Naive thymus-derived CD4-positive, alpha-beta T cell (primary cell): ENCODE measurements at regions of chr1 and their contacts with region 1.

Region 1: GRCh38 chr1:238501290-238501689 is 610.6 kb upstream of the ZP4 start:
- DNase-seq: no peak
- ATAC-seq: no peak
- H3K4me3 ChIP-seq: no peak overlapping the region
- H3K4me3 Mint-ChIP-seq: no peak overlapping the region
- H3K27ac ChIP-seq: no peak overlapping the region
- H3K27ac Mint-ChIP-seq: no peak overlapping the region
- H3K4me1 ChIP-seq: no peaks in the 10 kb centered on the region
- H3K4me1 Mint-ChIP-seq: no peaks in the 10 kb centered on the region
- H3K27me3 ChIP-seq: no peaks in the 10 kb centered on the region
- H3K27me3 Mint-ChIP-seq: no peaks in the 10 kb centered on the region

Region 2: DNA sequence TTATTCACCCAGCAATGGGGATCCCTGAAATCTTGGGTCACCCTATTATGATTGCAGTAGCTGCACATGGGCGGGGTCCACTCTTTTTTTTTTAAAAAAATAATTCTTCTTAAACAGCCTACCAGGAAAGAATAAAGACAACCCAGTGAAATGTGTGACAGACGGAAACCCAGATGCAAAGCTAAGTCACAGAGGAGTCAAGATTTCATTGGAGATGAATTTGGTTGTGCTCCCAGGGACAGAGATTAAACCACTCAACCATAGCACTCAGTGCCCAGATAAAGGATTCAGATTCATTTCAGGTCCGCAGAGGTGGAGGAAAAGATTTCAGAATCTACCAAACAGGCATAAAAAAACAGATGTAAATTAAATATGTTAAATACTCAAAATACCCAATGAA is 27.0 kb before region 1 on chr1:
- CTCF ChIA-PET with region 1: no interaction called
- POLR2A ChIA-PET with region 1: no interaction called
- intact Hi-C with region 1: loop called in 1 of 2 experiments (anchors 5 kb)
- DNase-seq: no peak
- ATAC-seq: no peak
- H3K4me3 ChIP-seq: no peak overlapping the region
- H3K4me3 Mint-ChIP-seq: no peak overlapping the region
- H3K27ac ChIP-seq: no peak overlapping the region
- H3K27ac Mint-ChIP-seq: no peak overlapping the region
- H3K4me1 ChIP-seq: no peaks in the 10 kb centered on the region
- H3K4me1 Mint-ChIP-seq: no peaks in the 10 kb centered on the region
- H3K27me3 ChIP-seq: no peaks in the 10 kb centered on the region
- H3K27me3 Mint-ChIP-seq: no peaks in the 10 kb centered on the region

Region 3: GRCh38 chr1:239288820-239289554 is 787.7 kb after region 1 on chr1:
- CTCF ChIA-PET with region 1: no interaction called
- POLR2A ChIA-PET with region 1: no interaction called
- intact Hi-C with region 1: no loop called
- DNase-seq: no peak
- ATAC-seq: no peak
- H3K4me3 ChIP-seq: no peak overlapping the region
- H3K4me3 Mint-ChIP-seq: no peak overlapping the region
- H3K27ac ChIP-seq: no peak overlapping the region
- H3K27ac Mint-ChIP-seq: no peak overlapping the region
- H3K4me1 ChIP-seq: no peaks in the 10 kb centered on the region
- H3K4me1 Mint-ChIP-seq: no peaks in the 10 kb centered on the region
- H3K27me3 ChIP-seq: no peaks in the 10 kb centered on the region
- H3K27me3 Mint-ChIP-seq: peaks cover 0 to 37% (median 20%) of the 10 kb centered on the region in 5 donors